ENCODE measurements at regions of chr7 and their contacts with region 1.

Region 1: DNA sequence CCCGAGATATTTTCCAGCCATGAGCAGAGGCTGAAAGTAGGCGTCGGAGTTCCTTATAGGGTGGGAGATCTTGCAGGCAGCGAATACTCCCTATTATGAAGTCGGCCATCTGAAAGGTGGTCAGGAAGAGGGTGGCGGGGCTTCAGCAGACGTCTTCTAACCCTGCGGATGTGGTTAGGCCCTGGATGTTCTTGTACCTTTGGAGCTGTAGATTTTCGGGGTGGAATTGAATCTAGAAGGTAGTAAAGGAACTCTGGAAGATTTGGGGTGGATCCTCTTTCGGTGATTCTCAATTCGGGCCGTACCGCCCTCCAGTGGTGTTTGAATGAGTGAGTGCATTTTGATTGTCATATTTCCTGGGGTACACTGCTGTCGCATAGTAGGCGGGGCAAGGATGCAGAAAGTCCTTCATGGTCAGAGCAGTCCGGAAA is 635 bp downstream of the NUP205 start:
- DNase-seq: peak; percentile 82
- H3K4me3 ChIP-seq: peak overlapping the region; percentile 87
- H3K27ac ChIP-seq: peak overlapping the region; percentile 92
- H3K4me1 ChIP-seq: peaks cover 7% of the 10 kb centered on the region; the same call in 1 of the 2 replicates
- H3K27me3 ChIP-seq: no peaks in the 10 kb centered on the region

Region 2: DNA sequence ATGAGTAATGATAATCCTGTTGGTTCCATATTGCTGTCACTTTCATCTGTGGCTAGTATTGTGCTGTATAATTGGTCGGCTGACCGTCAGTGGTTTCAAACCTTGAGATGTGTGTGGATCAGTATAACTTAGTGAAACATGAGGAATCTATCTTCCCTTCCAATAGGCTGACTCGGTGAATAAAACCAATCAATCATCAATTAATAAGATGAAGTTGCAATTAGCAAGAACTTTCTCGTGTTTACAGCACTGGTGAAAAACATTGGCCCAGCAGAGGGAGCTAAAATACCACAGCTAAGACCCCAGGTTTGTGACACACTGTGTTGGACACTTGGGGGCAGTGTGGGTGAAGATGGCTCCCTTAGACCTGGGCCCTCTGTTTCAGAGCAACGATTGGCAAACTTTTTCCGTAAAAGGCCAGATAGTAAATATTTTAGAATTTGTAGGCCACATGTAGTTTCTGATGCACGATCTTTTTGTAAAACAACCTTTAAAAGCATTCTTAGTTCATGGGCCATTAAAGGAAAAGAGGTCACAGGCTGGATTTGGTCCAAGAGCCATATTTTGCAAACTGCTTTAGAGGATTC is 276.9 kb before region 1 on chr7:
- in situ Hi-C with region 1: loop called (anchors 25 kb)
- DNase-seq: peak; percentile 92
- H3K4me3 ChIP-seq: peak overlapping the region; percentile 53
- H3K27ac ChIP-seq: no peak overlapping the region
- H3K4me1 ChIP-seq: peaks cover 4% of the 10 kb centered on the region; the same call in 1 of the 2 replicates
- H3K27me3 ChIP-seq: 0 out of 2 replicates have a peak, but pooled peaks cover 4% of the 10 kb centered on the region

Region 3: DNA sequence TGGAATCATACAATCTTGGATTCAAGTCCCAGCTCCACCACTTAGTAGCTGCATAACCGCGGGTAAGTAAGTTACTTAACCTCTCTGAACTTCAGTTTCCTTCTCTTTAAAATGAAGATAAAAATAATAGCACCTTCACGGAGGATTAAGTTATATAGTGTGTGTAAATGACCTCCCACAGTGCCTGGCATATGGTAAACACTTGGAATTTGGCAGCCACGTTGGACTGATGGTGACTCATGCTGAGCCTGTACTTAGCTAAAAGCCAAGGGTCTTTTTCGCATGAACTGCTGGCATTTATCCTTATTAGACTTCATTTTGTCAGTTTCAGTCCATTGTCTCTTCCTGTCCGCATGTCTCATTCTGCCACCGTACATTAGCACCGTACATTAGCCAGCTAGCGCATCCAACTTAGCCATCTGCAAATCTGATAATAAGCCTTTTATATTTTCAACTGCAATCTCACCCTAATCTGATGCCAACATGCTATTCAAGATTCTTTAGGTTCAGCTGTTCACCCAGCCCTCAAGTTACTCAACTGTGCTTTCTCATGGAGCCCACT is 158.4 kb after region 1 on chr7:
- in situ Hi-C with region 1: no loop called
- DNase-seq: peak; percentile 87
- H3K4me3 ChIP-seq: no peak overlapping the region
- H3K27ac ChIP-seq: peak overlapping the region; percentile 36
- H3K4me1 ChIP-seq: peaks cover 32% of the 10 kb centered on the region
- H3K27me3 ChIP-seq: no peaks in the 10 kb centered on the region

Measured in GM23248 (cell line).